IMR-90 (cell line): ENCODE measurements at regions of chr4 and their contacts with region 1.

Region 1: DNA sequence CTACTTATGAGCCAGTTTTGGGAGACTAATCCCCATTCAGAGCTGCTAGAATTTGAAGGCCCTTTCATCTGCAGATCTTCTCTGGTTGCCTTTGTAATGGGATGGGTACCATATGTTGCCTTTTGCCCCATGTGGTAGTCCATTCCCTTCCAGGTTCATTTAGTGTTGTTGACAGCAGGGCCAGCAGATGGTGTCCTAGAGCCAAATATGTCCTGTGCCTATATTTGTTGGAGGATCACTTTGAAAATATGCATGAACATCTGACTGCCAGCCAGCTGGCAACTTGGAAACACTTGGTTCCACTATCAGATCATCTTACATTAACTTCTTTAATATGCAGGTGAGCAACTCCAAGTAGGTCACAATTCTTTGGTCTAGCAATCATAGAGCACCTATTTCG is 30.4 kb downstream of the CFAP299 start:
- DNase-seq: peak; percentile 76
- ATAC-seq: peak; percentile 94
- H3K4me3 ChIP-seq: no peak overlapping the region
- H3K27ac ChIP-seq: no peak overlapping the region
- H3K4me1 ChIP-seq: 0 out of 2 replicates have a peak, but pooled peaks cover under 1% of the 10 kb centered on the region
- H3K27me3 ChIP-seq: no peaks in the 10 kb centered on the region
- CTCF ChIP-seq: peak; percentile 91
- POLR2A ChIP-seq: no peak
- RAD21 ChIP-seq: peak; percentile 92

Region 2: DNA sequence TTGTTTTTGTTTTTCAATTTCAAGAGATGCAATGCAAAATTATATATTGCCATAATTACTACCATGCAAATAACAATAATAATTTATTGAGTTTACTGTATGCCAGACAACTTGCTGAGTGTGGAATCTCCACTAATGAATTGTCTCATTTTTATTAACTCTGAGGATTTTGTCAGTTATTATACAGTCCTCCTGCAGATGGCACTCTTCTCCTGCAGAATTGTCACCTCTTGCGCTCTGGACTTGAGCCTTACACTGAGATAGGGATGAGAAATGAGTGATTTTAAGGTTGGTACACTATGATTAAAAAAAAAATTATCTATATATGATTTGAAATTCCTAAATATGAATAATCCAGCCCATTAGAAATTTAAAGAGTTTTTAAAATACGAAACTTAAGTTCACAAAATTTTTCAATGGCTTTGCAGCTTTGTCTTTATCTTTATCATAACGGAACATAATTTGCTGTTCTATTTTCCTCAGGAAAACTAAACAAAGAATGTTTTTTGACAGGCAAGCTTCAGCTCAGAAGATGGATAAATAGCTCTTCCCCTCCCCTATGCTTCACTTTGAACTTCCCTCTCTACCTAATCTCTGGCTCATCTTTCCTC is 1414.0 kb before region 1 on chr4:
- CTCF ChIA-PET with region 1: no interaction called
- POLR2A ChIA-PET with region 1: no interaction called
- dilution Hi-C with region 1: no loop called
- in situ Hi-C with region 1: no loop called
- intact Hi-C with region 1: loop called (anchors 5 kb)
- DNase-seq: peak; percentile 45
- ATAC-seq: peak; percentile 80
- H3K4me3 ChIP-seq: no peak overlapping the region
- H3K27ac ChIP-seq: no peak overlapping the region
- H3K4me1 ChIP-seq: no peaks in the 10 kb centered on the region
- H3K27me3 ChIP-seq: peaks cover 5% of the 10 kb centered on the region
- CTCF ChIP-seq: peak; percentile 72
- POLR2A ChIP-seq: no peak
- RAD21 ChIP-seq: peak; percentile 77

Region 3: DNA sequence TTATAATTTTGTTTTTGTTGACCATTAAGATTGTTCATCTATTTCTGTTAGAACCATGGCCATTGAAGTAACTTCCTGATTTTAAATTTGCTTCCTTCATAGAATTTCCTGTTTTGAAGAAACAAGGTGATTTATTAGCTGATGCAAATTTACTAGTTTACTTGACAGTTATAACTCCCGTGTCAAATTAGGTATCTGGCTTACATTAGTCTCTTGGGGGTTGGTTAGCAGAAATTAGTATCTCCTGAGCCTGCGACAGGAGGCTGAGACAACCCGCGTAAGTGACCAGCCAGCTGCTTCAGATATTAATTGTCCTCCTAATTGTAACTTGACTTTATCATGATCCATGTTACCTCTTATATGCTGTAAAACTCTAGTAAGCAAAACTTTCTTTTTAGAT is 123.9 kb after region 1 on chr4:
- CTCF ChIA-PET with region 1: no interaction called
- POLR2A ChIA-PET with region 1: no interaction called
- dilution Hi-C with region 1: no loop called
- in situ Hi-C with region 1: no loop called
- intact Hi-C with region 1: no loop called
- DNase-seq: no peak
- ATAC-seq: no peak
- H3K4me3 ChIP-seq: no peak overlapping the region
- H3K27ac ChIP-seq: no peak overlapping the region
- H3K4me1 ChIP-seq: no peaks in the 10 kb centered on the region
- H3K27me3 ChIP-seq: no peaks in the 10 kb centered on the region
- CTCF ChIP-seq: no peak
- POLR2A ChIP-seq: no peak
- RAD21 ChIP-seq: no peak

Region 4: DNA sequence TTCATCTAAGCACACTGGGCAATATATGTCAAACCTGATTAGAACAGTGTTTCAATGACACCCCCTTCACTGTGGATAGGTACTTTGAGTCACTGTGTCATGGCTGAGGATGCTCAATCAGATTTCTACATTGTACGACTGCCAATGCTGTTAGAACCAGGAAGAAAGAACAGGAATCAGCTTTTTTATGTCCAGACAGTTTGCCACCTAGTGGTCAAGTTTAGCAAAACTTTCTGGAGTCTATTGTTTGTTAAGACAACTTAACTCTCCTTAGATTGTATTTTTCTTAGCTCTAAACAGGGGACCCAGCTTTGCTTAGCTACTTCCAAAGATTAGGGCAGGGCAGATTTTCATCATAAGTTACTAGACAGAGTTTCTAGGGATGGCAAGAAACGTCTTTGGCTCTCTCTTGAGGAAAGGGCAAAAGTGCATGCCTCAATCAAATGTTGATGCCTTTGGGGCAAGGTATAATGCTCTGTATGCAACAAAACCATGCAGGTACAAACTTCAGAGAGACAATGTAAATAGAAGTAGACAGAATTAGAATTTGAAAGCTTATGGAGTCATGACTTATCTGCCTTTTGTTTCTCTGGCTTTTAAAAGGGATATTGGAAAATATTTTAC is 624.1 kb after region 1 on chr4:
- CTCF ChIA-PET with region 1: interaction called, 25 read pairs
- POLR2A ChIA-PET with region 1: no interaction called
- dilution Hi-C with region 1: loop called (anchors 25 kb)
- in situ Hi-C with region 1: loop called (anchors 5 kb)
- intact Hi-C with region 1: loop called (anchors 1 kb)
- DNase-seq: peak; percentile 73
- ATAC-seq: peak; percentile 66
- H3K4me3 ChIP-seq: no peak overlapping the region
- H3K27ac ChIP-seq: no peak overlapping the region
- H3K4me1 ChIP-seq: no peaks in the 10 kb centered on the region
- H3K27me3 ChIP-seq: peaks cover 5% of the 10 kb centered on the region
- CTCF ChIP-seq: peak; percentile 68
- POLR2A ChIP-seq: no peak
- RAD21 ChIP-seq: peak; percentile 63

Region 5: DNA sequence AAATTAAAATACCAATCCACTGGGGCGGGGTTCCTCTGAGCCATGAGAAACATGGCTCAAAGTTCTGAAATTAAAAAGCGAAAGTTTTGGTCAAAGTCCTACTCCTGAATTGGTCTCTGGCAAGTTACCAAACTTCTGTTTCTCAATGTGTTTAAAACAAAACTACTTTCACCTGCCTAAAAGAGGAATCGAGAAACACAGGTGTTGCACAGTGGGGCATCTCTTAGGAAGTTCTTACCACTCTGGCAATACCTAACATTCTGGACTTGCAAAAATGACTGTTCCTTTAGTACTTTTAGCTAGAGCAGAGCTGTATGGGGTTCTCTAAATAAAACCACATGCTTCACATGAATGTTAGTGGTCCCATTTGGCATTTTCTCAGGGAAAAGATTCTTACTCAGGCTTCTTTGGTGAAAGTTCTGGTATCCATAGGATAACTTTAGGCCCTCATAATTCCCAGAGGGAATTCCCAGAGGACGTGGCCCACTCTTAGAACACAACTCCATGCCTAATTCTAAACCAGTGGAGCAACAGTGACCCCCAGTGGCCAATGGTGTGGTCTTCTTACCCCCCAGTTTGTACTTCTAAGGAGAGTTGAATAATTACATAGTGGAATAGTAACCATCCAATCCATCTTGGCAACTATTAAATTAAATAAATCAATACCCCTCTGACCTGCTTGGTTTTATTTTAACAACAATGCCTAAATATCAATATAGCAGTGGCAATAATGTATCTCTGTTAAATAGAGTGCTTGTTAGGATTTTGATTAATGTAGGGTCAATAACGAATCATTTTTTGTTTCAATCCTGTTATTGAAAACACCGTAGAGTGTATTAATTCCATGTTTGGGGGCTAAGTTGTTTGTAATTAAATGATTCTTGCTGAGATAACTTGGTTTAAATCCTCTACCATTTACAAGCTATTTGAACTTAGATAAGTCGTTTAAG is 686.5 kb after region 1 on chr4:
- CTCF ChIA-PET with region 1: interaction called, 17 read pairs
- POLR2A ChIA-PET with region 1: no interaction called
- dilution Hi-C with region 1: no loop called
- in situ Hi-C with region 1: no loop called
- intact Hi-C with region 1: loop called (anchors 2 kb)
- DNase-seq: peak; percentile 74
- ATAC-seq: peak; percentile 98
- H3K4me3 ChIP-seq: no peak overlapping the region
- H3K27ac ChIP-seq: no peak overlapping the region
- H3K4me1 ChIP-seq: no peaks in the 10 kb centered on the region; the same call in 1 of the 2 replicates
- H3K27me3 ChIP-seq: peaks cover 7% of the 10 kb centered on the region
- CTCF ChIP-seq: peak; percentile 75
- POLR2A ChIP-seq: no peak
- RAD21 ChIP-seq: peak; percentile 80

Region 6: GRCh38 chr4:81369886-81370285 is 1004.0 kb after region 1 on chr4:
- CTCF ChIA-PET with region 1: no interaction called
- POLR2A ChIA-PET with region 1: no interaction called
- dilution Hi-C with region 1: no loop called
- in situ Hi-C with region 1: no loop called
- intact Hi-C with region 1: loop called (anchors 5 kb)
- DNase-seq: no peak
- ATAC-seq: peak; percentile 46; the same call in 1 of the 2 replicates
- H3K4me3 ChIP-seq: no peak overlapping the region
- H3K27ac ChIP-seq: no peak overlapping the region
- H3K4me1 ChIP-seq: no peaks in the 10 kb centered on the region
- H3K27me3 ChIP-seq: no peaks in the 10 kb centered on the region
- CTCF ChIP-seq: no peak; the same call in 1 of the 2 replicates
- POLR2A ChIP-seq: no peak
- RAD21 ChIP-seq: peak; percentile 19; the same call in 1 of the 2 replicates